CD4-positive, alpha-beta T cell (primary cell): ENCODE measurements at regions of chr16 and their contacts with region 1.

Region 1: GRCh38 chr16:71441348-71441781 is 489 bp downstream of the TLE7 start:
- DNase-seq: peak in 6 of 14 experiments; percentile 8 to 60 (median 29)
- ATAC-seq: peak; percentile 39
- H3K4me3 ChIP-seq: no peak overlapping the region
- H3K4me3 Mint-ChIP-seq: no peak overlapping the region
- H3K27ac ChIP-seq: no peak overlapping the region
- H3K27ac Mint-ChIP-seq: no peak overlapping the region
- H3K4me1 ChIP-seq: peaks cover 5% of the 10 kb centered on the region
- H3K4me1 Mint-ChIP-seq: no peaks in the 10 kb centered on the region
- H3K27me3 ChIP-seq: peaks cover 0 to 6% of the 10 kb centered on the region in 2 experiments
- H3K27me3 Mint-ChIP-seq: peaks cover 30% of the 10 kb centered on the region
- CTCF ChIP-seq: peak; percentile 60

Region 2: GRCh38 chr16:71421911-71422310 is 19.5 kb before region 1 on chr16:
- CTCF ChIA-PET with region 1: no interaction called
- POLR2A ChIA-PET with region 1: no interaction called
- intact Hi-C with region 1: no loop called
- DNase-seq: peak in 5 of 14 experiments; percentile 5 to 55 (median 12)
- ATAC-seq: peak; percentile 52
- H3K4me3 ChIP-seq: no peak overlapping the region
- H3K4me3 Mint-ChIP-seq: no peak overlapping the region
- H3K27ac ChIP-seq: no peak overlapping the region
- H3K27ac Mint-ChIP-seq: no peak overlapping the region
- H3K4me1 ChIP-seq: no peaks in the 10 kb centered on the region
- H3K4me1 Mint-ChIP-seq: no peaks in the 10 kb centered on the region
- H3K27me3 ChIP-seq: peaks cover 11 to 37% of the 10 kb centered on the region in 2 experiments
- H3K27me3 Mint-ChIP-seq: peaks cover 65% of the 10 kb centered on the region
- CTCF ChIP-seq: peak; percentile 36

Region 3: GRCh38 chr16:71461686-71462648 is 20.6 kb after region 1 on chr16 and contains the start of gene ZNF23:
- CTCF ChIA-PET with region 1: no interaction called
- POLR2A ChIA-PET with region 1: no interaction called
- intact Hi-C with region 1: no loop called
- DNase-seq: peak; percentile 53 to 87 (median 72)
- ATAC-seq: peak; percentile 95
- H3K4me3 ChIP-seq: peak within 1 kb of the TSS; percentile 96
- H3K4me3 Mint-ChIP-seq: peak within 1 kb of the TSS; percentile 94
- H3K27ac ChIP-seq: peak within 1 kb of the TSS; percentile 68 to 79
- H3K27ac Mint-ChIP-seq: peak within 1 kb of the TSS; percentile 85
- H3K4me1 ChIP-seq: peaks cover 11% of the 10 kb centered on the region
- H3K4me1 Mint-ChIP-seq: peaks cover 34% of the 10 kb centered on the region
- H3K27me3 ChIP-seq: no peaks in the 10 kb centered on the region
- H3K27me3 Mint-ChIP-seq: no peaks in the 10 kb centered on the region
- CTCF ChIP-seq: peak; percentile 54
- total RNA-seq, gene ZNF23: 7.0 to 8.4 TPM

Region 4: GRCh38 chr16:71499775-71500364 is 58.5 kb after region 1 on chr16:
- CTCF ChIA-PET with region 1: no interaction called
- POLR2A ChIA-PET with region 1: no interaction called
- intact Hi-C with region 1: loop called (anchors 1 kb)
- DNase-seq: peak in 13 of 14 experiments; percentile 10 to 79 (median 33)
- ATAC-seq: peak; percentile 78
- H3K4me3 ChIP-seq: no peak overlapping the region
- H3K4me3 Mint-ChIP-seq: no peak overlapping the region
- H3K27ac ChIP-seq: no peak overlapping the region
- H3K27ac Mint-ChIP-seq: no peak overlapping the region
- H3K4me1 ChIP-seq: no peaks in the 10 kb centered on the region
- H3K4me1 Mint-ChIP-seq: no peaks in the 10 kb centered on the region
- H3K27me3 ChIP-seq: no peaks in the 10 kb centered on the region
- H3K27me3 Mint-ChIP-seq: peaks cover 19% of the 10 kb centered on the region
- CTCF ChIP-seq: peak; percentile 79

Region 5: GRCh38 chr16:71610447-71610846 is 169.1 kb after region 1 on chr16:
- CTCF ChIA-PET with region 1: no interaction called
- POLR2A ChIA-PET with region 1: no interaction called
- intact Hi-C with region 1: no loop called
- DNase-seq: no peak
- ATAC-seq: no peak
- H3K4me3 ChIP-seq: no peak overlapping the region
- H3K4me3 Mint-ChIP-seq: no peak overlapping the region
- H3K27ac ChIP-seq: no peak overlapping the region
- H3K27ac Mint-ChIP-seq: no peak overlapping the region
- H3K4me1 ChIP-seq: peaks cover 6% of the 10 kb centered on the region
- H3K4me1 Mint-ChIP-seq: no peaks in the 10 kb centered on the region
- H3K27me3 ChIP-seq: peaks cover 4 to 5% of the 10 kb centered on the region in 2 experiments
- H3K27me3 Mint-ChIP-seq: peaks cover 27% of the 10 kb centered on the region
- CTCF ChIP-seq: no peak